ENCODE measurements at regions of chr18 and their contacts with region 1.

Region 1: GRCh38 chr18:33231474-33232317 is 208.8 kb downstream of the CCDC178 start:
- DNase-seq: peak; percentile 77
- H3K4me3 Mint-ChIP-seq: no peak overlapping the region
- H3K27ac Mint-ChIP-seq: no peak overlapping the region
- H3K4me1 Mint-ChIP-seq: peaks cover 8% of the 10 kb centered on the region
- H3K27me3 Mint-ChIP-seq: no peaks in the 10 kb centered on the region
- CTCF ChIP-seq: peak; percentile 92

Region 2: GRCh38 chr18:33052886-33053285 is 178.8 kb before region 1 on chr18:
- CTCF ChIA-PET with region 1: no interaction called
- intact Hi-C with region 1: no loop called
- DNase-seq: no peak
- H3K4me3 Mint-ChIP-seq: no peak overlapping the region
- H3K27ac Mint-ChIP-seq: no peak overlapping the region
- H3K4me1 Mint-ChIP-seq: no peaks in the 10 kb centered on the region
- H3K27me3 Mint-ChIP-seq: no peaks in the 10 kb centered on the region
- CTCF ChIP-seq: no peak

Region 3: GRCh38 chr18:33169218-33169617 is 62.5 kb before region 1 on chr18:
- CTCF ChIA-PET with region 1: no interaction called
- intact Hi-C with region 1: no loop called
- DNase-seq: no peak
- H3K4me3 Mint-ChIP-seq: no peak overlapping the region
- H3K27ac Mint-ChIP-seq: no peak overlapping the region
- H3K4me1 Mint-ChIP-seq: no peaks in the 10 kb centered on the region
- H3K27me3 Mint-ChIP-seq: no peaks in the 10 kb centered on the region
- CTCF ChIP-seq: no peak

Region 4: DNA sequence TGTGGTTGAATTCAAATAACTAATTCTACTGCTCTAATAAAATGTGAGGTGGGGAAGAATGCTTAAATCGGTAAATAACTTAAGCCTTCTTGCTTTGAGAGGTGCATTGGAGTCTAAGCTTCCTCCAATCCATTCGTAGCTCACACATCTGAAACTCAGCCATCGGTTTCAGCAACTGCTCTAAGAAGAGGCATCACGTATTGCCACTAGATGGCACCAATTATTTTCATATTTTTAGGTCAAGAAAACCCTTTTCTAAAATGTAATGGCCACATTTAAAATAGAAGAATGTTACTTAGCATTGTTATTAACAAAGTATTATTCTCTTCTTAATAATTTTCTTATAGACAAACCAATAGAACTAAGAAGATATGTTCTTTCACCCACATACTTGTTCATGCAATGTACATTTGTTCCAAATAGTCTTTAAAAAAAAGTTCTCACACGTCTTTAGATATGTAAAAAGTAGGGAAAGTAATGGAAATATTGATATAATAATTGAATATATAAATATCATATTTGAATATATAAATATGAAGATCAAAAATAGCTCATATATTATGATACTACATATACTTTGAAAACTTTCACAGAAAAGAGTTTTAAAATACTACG is 21.0 kb before region 1 on chr18:
- CTCF ChIA-PET with region 1: interaction called, 10 read pairs
- intact Hi-C with region 1: no loop called
- DNase-seq: peak; percentile 13
- H3K4me3 Mint-ChIP-seq: no peak overlapping the region
- H3K27ac Mint-ChIP-seq: no peak overlapping the region
- H3K4me1 Mint-ChIP-seq: no peaks in the 10 kb centered on the region
- H3K27me3 Mint-ChIP-seq: no peaks in the 10 kb centered on the region
- CTCF ChIP-seq: peak; percentile 42

Measured in Calu3 (cell line).